Left ventricle myocardium inferior (tissue), 1 donor: ENCODE measurements at regions of chr20 and their contacts with region 1.

Region 1: DNA sequence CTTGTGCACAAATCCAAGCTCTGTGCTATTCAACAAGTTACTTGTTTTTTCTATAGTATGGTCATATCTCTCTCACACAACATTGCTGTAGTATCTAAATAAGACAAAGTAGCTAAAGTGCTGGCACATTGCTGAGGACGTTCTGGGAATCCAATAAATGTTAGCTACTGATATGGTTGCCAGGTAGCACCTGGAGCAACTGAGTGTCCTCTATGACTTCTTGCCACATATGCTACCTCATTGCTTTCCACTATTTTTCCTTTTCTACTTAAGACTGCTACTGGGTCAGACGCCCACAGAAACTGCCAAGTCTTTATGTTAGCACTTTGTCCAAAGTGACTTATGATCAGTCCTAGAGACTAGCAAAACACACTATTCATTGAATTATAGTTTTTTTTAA is 85.3 kb downstream of the SYCP2 start:
- DNase-seq: no peak
- H3K4me3 ChIP-seq: no peak overlapping the region
- H3K27ac ChIP-seq: no peak overlapping the region
- H3K4me1 ChIP-seq: peaks cover 10% of the 10 kb centered on the region
- H3K27me3 ChIP-seq: no peaks in the 10 kb centered on the region
- CTCF ChIP-seq: no peak

Region 2: GRCh38 chr20:59782986-59783640 is 65.1 kb before region 1 on chr20:
- intact Hi-C with region 1: loop called (anchors 5 kb)
- DNase-seq: peak; percentile 52
- H3K4me3 ChIP-seq: no peak overlapping the region
- H3K27ac ChIP-seq: no peak overlapping the region
- H3K4me1 ChIP-seq: no peaks in the 10 kb centered on the region
- H3K27me3 ChIP-seq: peaks cover 4% of the 10 kb centered on the region
- CTCF ChIP-seq: peak; percentile 92